CD4-positive, alpha-beta T cell (primary cell): ENCODE measurements at regions of chr22 and their contacts with region 1.

Region 1: DNA sequence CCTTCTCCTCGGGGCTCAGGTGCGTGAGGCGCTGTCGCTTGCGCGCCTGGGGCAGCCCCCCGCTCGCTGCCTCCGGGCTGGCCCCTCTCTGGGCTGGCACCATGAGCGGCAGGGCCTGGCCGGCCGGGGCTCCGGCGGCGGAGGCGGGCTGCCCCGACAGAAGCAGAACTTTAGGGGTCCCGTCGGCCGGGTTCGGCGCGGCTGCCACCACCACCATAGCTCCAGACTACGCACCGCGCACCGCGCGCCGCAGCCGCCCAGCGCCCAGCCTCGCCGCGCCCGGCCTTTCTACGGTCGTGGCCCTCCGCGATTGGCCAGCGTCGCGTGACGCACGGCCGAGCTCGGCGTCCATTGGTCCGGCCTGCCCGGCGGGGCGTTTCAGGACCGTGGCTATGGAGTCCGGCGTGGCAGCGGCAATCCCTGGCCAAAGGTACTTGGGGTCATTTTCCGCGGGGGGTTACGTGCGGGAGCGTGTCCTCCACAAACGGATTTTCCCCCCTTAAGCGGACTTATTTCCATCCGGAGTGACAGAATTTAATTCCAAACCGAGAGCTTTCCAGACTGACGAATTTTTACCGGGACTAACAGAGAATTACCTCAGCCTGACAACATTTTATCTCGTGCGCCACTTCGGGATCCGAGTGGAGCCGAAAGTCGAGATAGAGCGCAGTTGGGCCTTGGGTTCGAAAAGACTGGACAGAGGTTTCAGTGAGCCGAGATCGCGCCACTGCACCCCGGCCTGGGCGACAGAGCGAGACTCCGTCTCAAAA is at the start of gene XBP1:
- DNase-seq: peak; percentile 77 to 96 (median 86)
- ATAC-seq: peak; percentile 91
- H3K4me3 ChIP-seq: peak within 1 kb of the TSS; percentile 99
- H3K4me3 Mint-ChIP-seq: peak within 1 kb of the TSS; percentile 97
- H3K27ac ChIP-seq: peak within 1 kb of the TSS; percentile 92 to 93
- H3K27ac Mint-ChIP-seq: peak within 1 kb of the TSS; percentile 96
- H3K4me1 ChIP-seq: peaks cover 44% of the 10 kb centered on the region
- H3K4me1 Mint-ChIP-seq: peaks cover 60% of the 10 kb centered on the region
- H3K27me3 ChIP-seq: no peaks in the 10 kb centered on the region
- H3K27me3 Mint-ChIP-seq: no peaks in the 10 kb centered on the region
- CTCF ChIP-seq: no peak
- total RNA-seq, gene XBP1: 180 to 190 TPM

Region 2: GRCh38 chr22:28557184-28557583 is 243.3 kb before region 1 on chr22:
- CTCF ChIA-PET with region 1: no interaction called
- POLR2A ChIA-PET with region 1: no interaction called
- intact Hi-C with region 1: no loop called
- DNase-seq: no peak
- ATAC-seq: no peak
- H3K4me3 ChIP-seq: no peak overlapping the region
- H3K4me3 Mint-ChIP-seq: no peak overlapping the region
- H3K27ac ChIP-seq: no peak overlapping the region
- H3K27ac Mint-ChIP-seq: no peak overlapping the region
- H3K4me1 ChIP-seq: no peaks in the 10 kb centered on the region
- H3K4me1 Mint-ChIP-seq: no peaks in the 10 kb centered on the region
- H3K27me3 ChIP-seq: peaks cover 0 to 9% of the 10 kb centered on the region in 2 experiments
- H3K27me3 Mint-ChIP-seq: peaks cover 31% of the 10 kb centered on the region
- CTCF ChIP-seq: no peak

Region 3: DNA sequence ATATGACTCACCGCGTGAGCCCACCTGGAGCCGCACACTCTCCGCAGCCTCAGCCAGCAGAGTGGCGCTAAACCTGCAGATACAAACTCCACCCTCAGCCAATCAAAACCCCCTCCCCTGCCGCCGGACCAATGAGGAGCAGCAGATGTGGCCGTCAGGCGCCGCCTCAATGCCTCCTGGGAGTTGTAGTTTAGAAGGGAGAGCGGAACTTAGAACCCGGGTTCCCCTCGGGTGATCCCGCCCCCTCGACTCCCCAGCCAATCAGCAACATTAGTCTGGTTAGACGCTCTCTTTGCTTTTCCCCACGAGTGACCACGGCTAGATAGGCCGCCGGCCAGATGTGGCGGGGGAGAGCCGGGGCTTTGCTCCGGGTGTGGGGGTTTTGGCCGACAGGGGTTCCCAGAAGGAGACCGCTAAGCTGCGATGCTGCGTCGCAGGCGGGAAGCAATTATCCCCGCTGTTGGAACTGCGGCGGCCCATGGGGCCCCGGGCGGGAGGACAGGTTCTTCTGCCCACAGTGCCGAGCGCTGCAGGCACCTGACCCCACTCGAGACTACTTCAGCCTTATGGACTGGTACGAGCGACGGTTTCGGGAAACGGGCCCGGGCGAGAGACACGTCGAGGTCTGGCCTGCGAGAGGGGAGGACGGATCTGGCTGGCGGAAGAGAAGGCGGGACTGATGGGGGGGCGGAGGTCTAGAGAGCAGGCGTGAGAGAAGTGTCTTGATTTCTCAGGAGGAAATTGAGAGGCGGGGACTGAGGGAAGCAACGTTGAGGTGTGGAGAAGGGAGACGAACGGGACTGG is 58.5 kb before region 1 on chr22 and contains the starts of genes CHEK2 and HSCB:
- CTCF ChIA-PET with region 1: interaction called, 3 read pairs
- POLR2A ChIA-PET with region 1: interaction called, 12 read pairs
- intact Hi-C with region 1: loop called in 1 of 2 experiments (anchors 5 kb)
- DNase-seq: peak; percentile 90 to 99 (median 96)
- ATAC-seq: peak; percentile 93
- H3K4me3 ChIP-seq: peak within 1 kb of the TSS; percentile 98
- H3K4me3 Mint-ChIP-seq: peak within 1 kb of the TSS; percentile 98
- H3K27ac ChIP-seq: peak within 1 kb of the TSS; percentile 96
- H3K27ac Mint-ChIP-seq: peak within 1 kb of the TSS; percentile 94
- H3K4me1 ChIP-seq: peaks cover 21% of the 10 kb centered on the region
- H3K4me1 Mint-ChIP-seq: peaks cover 34% of the 10 kb centered on the region
- H3K27me3 ChIP-seq: no peaks in the 10 kb centered on the region
- H3K27me3 Mint-ChIP-seq: no peaks in the 10 kb centered on the region
- CTCF ChIP-seq: no peak
- total RNA-seq, gene CHEK2: 2.6 to 4.0 TPM
- total RNA-seq, gene HSCB: 3.4 to 3.7 TPM

Region 4: DNA sequence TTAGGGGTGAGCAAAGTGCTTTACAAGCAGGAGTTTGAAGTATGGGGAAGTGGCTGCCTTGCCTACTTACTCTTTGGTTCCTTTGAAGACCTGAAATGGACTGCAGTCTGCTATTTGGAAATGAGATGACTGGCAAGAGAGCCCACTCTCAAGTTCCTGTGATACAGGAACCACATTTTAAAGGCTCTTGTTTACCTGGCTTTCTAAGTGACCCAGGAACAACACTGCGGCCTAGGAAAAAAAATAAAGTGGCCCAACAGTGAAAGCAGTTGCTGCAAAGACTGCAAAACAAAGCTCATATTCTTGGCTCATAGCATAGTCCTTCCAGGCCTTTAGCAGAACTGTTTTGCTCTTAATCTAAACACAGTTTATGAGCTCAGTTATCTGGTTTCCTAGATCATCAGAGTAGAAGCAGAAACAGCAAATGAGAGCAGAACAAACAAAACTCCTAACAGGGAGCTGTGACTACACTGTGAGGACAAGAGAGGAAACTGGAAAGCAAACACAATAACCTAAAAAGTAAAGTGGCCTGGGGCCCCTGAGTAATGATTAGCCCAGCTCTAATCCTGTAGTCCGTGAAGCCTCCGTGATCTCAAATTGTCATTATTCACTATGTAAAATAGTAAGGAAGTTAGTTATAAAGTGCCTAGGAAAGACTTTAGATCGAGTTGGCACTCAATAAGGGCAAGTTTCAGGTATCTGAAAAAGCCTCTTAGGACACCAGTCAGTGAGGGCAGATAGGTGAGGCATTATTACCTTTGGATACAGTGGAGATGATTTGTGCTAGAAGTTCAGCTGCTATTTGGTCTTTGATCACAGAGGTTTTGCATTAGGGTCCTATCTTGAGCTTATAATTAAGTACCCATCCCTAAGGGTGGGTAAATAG is 16.5 kb before region 1 on chr22:
- CTCF ChIA-PET with region 1: no interaction called
- POLR2A ChIA-PET with region 1: interaction called, 14 read pairs
- intact Hi-C with region 1: no loop called
- DNase-seq: no peak
- ATAC-seq: no peak
- H3K4me3 ChIP-seq: no peak overlapping the region
- H3K4me3 Mint-ChIP-seq: no peak overlapping the region
- H3K27ac ChIP-seq: no peak overlapping the region
- H3K27ac Mint-ChIP-seq: no peak overlapping the region
- H3K4me1 ChIP-seq: no peaks in the 10 kb centered on the region
- H3K4me1 Mint-ChIP-seq: peaks cover 20% of the 10 kb centered on the region
- H3K27me3 ChIP-seq: no peaks in the 10 kb centered on the region
- H3K27me3 Mint-ChIP-seq: no peaks in the 10 kb centered on the region
- CTCF ChIP-seq: no peak

Region 5: DNA sequence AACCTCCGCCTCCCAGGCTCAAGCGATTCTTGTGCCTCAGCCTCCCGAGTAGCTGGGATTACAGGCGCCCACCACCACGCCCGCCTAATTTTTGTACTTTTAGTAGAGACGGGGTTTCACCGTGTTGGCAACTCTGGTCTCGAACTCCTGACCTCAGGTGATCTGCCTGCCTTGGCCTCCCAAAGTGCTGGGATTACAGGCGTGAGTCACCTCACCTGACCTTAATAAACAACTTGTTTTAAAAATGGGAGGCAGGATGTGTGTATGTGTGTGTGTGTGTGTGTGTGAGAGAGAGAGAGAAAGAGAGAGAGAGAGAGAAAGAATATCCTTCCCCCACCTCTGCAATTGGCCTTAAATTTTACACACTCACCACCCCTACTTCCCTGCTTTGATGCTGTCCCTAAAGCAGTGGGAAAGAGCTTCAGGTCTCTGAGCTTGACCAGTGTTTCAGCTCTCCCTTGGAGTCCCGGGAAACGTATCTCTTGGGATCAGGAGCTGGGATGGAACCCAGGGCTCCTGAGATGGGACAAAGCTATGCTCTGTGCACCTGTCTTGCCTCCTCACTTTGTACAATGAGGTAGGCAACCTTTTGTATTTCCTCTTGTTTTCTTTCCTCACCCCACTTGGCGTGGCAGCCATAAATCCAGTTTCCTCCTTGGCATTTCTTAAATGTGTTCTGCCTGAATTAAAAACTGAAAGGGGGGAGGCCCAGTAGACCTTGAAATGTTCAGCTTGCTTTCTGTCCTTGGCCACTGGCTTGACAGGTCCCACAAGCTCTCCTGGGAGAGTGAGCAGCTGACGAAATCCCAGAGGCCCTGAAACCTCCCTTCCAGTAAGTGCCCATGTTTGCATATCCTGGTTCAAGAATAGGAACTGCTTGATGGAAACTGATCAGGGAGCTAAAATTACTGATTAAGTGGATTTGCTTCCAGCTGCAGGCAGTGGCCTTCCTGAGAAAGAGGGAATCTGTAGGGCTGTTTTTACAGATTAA is 17.7 kb after region 1 on chr22:
- CTCF ChIA-PET with region 1: interaction called, 7 read pairs
- POLR2A ChIA-PET with region 1: interaction called, 161 read pairs
- intact Hi-C with region 1: loop called in 1 of 2 experiments (anchors 2 kb)
- DNase-seq: peak in 2 of 14 experiments; percentile 26 to 45
- ATAC-seq: no peak
- H3K4me3 ChIP-seq: no peak overlapping the region
- H3K4me3 Mint-ChIP-seq: peak overlapping the region; percentile 23
- H3K27ac ChIP-seq: no peak overlapping the region
- H3K27ac Mint-ChIP-seq: no peak overlapping the region
- H3K4me1 ChIP-seq: peaks cover 63% of the 10 kb centered on the region
- H3K4me1 Mint-ChIP-seq: peaks cover 63% of the 10 kb centered on the region
- H3K27me3 ChIP-seq: no peaks in the 10 kb centered on the region
- H3K27me3 Mint-ChIP-seq: no peaks in the 10 kb centered on the region
- CTCF ChIP-seq: no peak

Region 6: GRCh38 chr22:28882878-28883656 is 82.6 kb after region 1 on chr22 and contains the start of gene ZNRF3:
- CTCF ChIA-PET with region 1: no interaction called
- POLR2A ChIA-PET with region 1: interaction called, 19 read pairs
- intact Hi-C with region 1: loop called (anchors 5 to 10 kb)
- DNase-seq: peak; percentile 86 to 96 (median 92)
- ATAC-seq: peak; percentile 87
- H3K4me3 ChIP-seq: peak within 1 kb of the TSS; percentile 82
- H3K4me3 Mint-ChIP-seq: peak within 1 kb of the TSS; percentile 94
- H3K27ac ChIP-seq: no peak within 1 kb of the TSS
- H3K27ac Mint-ChIP-seq: peak within 1 kb of the TSS; percentile 74
- H3K4me1 ChIP-seq: peaks cover 16% of the 10 kb centered on the region
- H3K4me1 Mint-ChIP-seq: peaks cover 23% of the 10 kb centered on the region
- H3K27me3 ChIP-seq: peaks cover 4 to 7% of the 10 kb centered on the region in 2 experiments
- H3K27me3 Mint-ChIP-seq: peaks cover 23% of the 10 kb centered on the region
- CTCF ChIP-seq: no peak
- total RNA-seq, gene ZNRF3: 0.38 to 0.61 TPM